K562 (cell line): ENCODE measurements at regions of chr12 and their contacts with region 1.

Region 1: DNA sequence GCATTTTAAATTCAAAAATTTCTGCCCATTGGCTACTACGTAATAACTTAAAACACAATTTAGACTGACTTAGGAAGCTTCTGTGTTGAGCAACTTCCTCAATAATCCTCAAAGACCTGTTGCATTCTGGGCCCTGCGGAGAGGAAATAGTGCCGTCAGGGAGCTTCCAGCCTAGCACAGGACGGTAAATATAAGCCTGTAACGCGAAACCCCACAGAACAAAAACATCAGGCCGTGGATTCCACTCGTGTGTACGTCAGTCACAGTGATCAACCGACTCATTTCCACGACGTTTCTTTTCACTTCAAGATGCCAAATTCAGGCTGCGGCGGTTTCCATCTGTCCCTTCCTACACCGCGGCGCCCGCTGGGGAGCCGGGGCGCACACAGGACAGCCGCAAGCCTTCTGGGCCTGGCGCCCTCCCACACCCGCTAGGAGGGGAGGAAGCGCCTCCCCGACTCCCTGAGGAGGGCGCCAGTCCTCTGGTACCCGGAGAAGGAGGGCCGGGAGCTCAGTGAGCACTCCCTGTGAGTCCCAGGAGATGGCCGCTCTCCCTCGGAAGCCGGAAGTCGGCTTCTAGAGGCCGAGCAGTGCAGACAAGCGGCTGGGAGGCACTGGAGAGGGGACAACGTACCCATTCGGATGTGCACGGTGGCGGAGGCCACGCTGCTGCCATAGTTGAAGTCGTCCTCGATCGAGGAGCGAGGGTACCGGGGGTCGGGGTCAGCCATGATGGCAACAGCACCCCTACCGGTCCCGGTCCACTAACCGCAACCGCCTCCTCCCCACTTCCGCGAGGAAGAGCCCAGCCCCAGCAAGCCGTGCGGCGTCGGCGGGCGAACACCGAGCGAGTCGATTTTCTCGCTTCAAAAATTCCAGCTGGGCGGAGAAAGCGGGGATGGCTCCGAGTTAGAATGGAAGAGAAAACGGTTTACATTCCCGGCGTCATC is at the start of gene TMBIM4:
- DNase-seq: peak; percentile 87 to 93 (median 90)
- ATAC-seq: peak; percentile 98
- H3K4me3 ChIP-seq: peak within 1 kb of the TSS; percentile 53
- H3K27ac ChIP-seq: peak within 1 kb of the TSS; percentile 92
- H3K4me1 ChIP-seq: peaks cover 0 to 5% of the 10 kb centered on the region in 2 experiments; a peak in 3 of 5 replicates
- H3K27me3 ChIP-seq: no peaks in the 10 kb centered on the region
- CTCF ChIP-seq: peak; percentile 45 to 70 (median 67)
- EP300 ChIP-seq: peak; percentile 9; the same call in 1 of the 2 replicates
- POLR2A ChIP-seq: peak; percentile 95
- RAD21 ChIP-seq: 0 out of 4 replicates have a peak, but pooled peaks of 1 of the 2 experiments have one; percentile 8
- polyA plus RNA-seq, gene TMBIM4: 231 to 272 TPM

Region 2: DNA sequence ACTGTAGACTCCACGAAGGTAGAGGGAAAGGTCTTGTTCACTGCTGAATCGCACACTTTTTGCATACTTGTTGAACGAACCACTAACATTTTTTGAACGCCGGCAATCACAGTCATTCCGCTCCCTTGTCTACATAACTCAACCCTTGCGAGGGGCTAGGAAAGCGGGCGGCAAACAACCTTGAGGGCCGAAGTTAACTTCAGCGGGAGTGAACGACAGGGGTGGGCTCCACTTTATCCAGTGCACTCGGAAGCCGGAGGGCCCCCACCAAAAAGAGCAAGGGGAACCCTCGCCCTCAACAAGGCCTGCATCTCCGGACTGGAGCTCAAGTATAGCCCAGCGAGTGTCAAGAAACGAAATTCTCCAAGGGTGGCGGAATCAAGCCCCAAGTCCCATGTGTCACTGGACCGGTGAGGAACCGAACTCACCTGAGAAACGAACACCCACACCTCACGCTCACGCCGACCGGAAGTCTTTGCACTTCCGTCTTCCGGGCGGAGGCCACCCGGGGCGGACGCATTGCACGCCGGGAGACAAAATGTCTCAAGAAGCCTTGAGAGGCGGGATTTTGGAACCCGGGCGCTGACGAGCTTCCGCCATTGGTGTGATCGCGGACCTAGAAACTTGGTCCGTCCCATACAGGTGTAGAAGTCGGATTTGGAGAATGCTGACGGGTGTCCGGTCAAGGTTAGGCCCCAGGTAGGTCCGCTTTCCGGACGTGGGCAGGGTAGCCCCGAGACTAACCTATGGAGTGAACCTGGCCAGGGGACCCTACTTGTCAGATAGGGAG is 39.0 kb before region 1 on chr12 and contains the start of gene LLPH:
- CTCF ChIA-PET with region 1: no interaction called
- POLR2A ChIA-PET with region 1: interaction called, 7 read pairs
- in situ Hi-C with region 1: no loop called
- intact Hi-C with region 1: loop called (anchors 2 kb)
- DNase-seq: peak; percentile 84 to 94 (median 88)
- ATAC-seq: peak; percentile 98
- H3K4me3 ChIP-seq: peak within 1 kb of the TSS; percentile 92
- H3K27ac ChIP-seq: peak within 1 kb of the TSS; percentile 85
- H3K4me1 ChIP-seq: peaks cover 4 to 6% of the 10 kb centered on the region in 2 experiments; a peak in 2 of 5 replicates
- H3K27me3 ChIP-seq: no peaks in the 10 kb centered on the region
- CTCF ChIP-seq: no peak
- EP300 ChIP-seq: 0 out of 2 replicates have a peak, but pooled peaks have one; percentile 28
- POLR2A ChIP-seq: peak; percentile 94
- RAD21 ChIP-seq: no peak
- polyA plus RNA-seq, gene LLPH: 67.4 to 87.3 TPM

Region 3: GRCh38 chr12:66159123-66159522 is 10.4 kb before region 1 on chr12:
- CTCF ChIA-PET with region 1: no interaction called
- POLR2A ChIA-PET with region 1: interaction called, 15 read pairs
- in situ Hi-C with region 1: no loop called
- intact Hi-C with region 1: no loop called
- DNase-seq: no peak
- ATAC-seq: no peak
- H3K4me3 ChIP-seq: no peak overlapping the region
- H3K27ac ChIP-seq: no peak overlapping the region
- H3K4me1 ChIP-seq: peaks cover 0 to 6% of the 10 kb centered on the region in 2 experiments; a peak in 2 of 5 replicates
- H3K27me3 ChIP-seq: no peaks in the 10 kb centered on the region
- CTCF ChIP-seq: no peak
- EP300 ChIP-seq: no peak
- POLR2A ChIP-seq: no peak
- RAD21 ChIP-seq: no peak

Region 4: DNA sequence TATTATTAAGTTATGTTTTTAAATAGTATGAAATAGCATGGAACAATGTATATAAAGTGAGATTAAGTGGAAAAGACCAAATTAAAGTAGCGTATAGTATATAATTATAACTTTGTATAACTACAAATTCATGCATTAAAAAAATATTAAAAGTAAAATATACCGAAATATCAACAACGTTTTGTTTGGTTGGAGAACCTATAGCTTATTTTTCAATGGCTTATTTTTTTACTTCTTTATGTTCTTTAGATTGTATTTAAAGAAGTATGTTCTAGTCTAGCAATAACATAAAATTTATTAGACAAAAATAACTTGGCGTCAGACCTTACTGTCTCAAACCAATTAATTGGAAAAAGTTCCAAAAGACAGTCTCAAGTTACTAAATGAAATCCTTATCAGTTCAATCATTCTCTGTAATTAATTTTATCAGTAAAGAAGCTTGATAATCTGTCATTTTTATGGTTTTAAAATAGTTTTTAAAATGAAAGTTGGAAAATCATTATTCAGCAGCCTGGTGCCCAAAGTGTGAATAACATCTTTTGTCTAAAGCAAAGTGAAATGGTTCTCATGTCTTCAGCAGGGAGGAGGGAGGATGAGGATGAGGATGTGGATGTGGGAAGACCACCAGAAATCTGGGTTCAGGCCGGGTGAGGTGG is 66.3 kb after region 1 on chr12:
- CTCF ChIA-PET with region 1: no interaction called
- POLR2A ChIA-PET with region 1: interaction called, 3 read pairs
- in situ Hi-C with region 1: no loop called
- intact Hi-C with region 1: loop called (anchors 1 kb)
- DNase-seq: no peak
- ATAC-seq: no peak
- H3K4me3 ChIP-seq: peak overlapping the region; percentile 45
- H3K27ac ChIP-seq: peak overlapping the region; percentile 41; the same call in 1 of the 3 replicates
- H3K4me1 ChIP-seq: peaks cover 8 to 9% of the 10 kb centered on the region in 2 experiments
- H3K27me3 ChIP-seq: peaks cover 2 to 5% of the 10 kb centered on the region in 2 experiments; a peak in 2 of 5 replicates
- CTCF ChIP-seq: no peak
- EP300 ChIP-seq: no peak
- POLR2A ChIP-seq: no peak
- RAD21 ChIP-seq: no peak

Region 5: GRCh38 chr12:66301944-66302826 is 132.7 kb after region 1 on chr12 and contains the start of gene HELB:
- CTCF ChIA-PET with region 1: no interaction called
- POLR2A ChIA-PET with region 1: no interaction called
- in situ Hi-C with region 1: no loop called
- intact Hi-C with region 1: loop called (anchors 1 kb)
- DNase-seq: peak; percentile 94 to 98 (median 97)
- ATAC-seq: peak; percentile 97
- H3K4me3 ChIP-seq: peak within 1 kb of the TSS; percentile 52
- H3K27ac ChIP-seq: peak within 1 kb of the TSS; percentile 82
- H3K4me1 ChIP-seq: peaks cover 7 to 9% of the 10 kb centered on the region in 2 experiments; a peak in 4 of 5 replicates
- H3K27me3 ChIP-seq: peaks cover 0 to 2% of the 10 kb centered on the region in 2 experiments; a peak in 1 of 5 replicates
- CTCF ChIP-seq: no peak
- EP300 ChIP-seq: 0 out of 2 replicates have a peak, but pooled peaks have one; percentile 23
- POLR2A ChIP-seq: peak; percentile 91
- RAD21 ChIP-seq: no peak
- polyA plus RNA-seq, gene HELB: 0.74 to 0.99 TPM